A673 (cell line): ENCODE measurements at regions of chr7 and their contacts with region 1.

Region 1: DNA sequence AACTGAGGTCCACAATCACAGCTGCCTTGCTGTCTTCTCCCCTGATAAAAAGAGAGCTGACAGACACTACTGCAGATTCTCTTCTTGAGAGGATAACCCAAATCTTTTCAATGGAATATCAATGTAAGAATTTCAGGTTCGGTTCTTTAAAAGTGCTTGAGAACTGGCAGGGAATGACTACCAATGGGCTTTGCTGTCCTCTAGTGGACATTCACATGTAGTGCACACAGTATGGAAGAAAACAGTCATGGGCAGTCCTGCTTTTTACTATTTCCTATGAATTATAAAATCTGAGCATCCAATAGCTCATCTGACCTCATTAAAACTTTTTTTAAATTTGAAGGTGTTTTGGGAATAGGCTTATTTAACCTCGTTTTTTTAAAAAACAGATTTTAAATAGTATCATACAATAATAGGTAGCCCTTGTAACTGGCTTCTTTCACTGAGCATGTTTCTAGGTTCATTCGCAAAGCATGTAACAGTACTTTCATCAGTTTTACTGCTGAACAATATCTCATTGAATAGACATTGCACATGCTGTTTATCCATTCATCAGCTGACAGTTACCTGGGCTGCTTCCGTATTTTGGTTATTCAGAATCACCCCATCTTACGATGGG is 18.3 kb downstream of the FZD9 start:
- DNase-seq: peak; percentile 68
- H3K4me3 ChIP-seq: no peak overlapping the region
- H3K27ac ChIP-seq: no peak overlapping the region
- H3K4me1 ChIP-seq: no peaks in the 10 kb centered on the region
- H3K27me3 ChIP-seq: no peaks in the 10 kb centered on the region
- CTCF ChIP-seq: peak; percentile 95

Region 2: GRCh38 chr7:73316521-73316920 is 135.4 kb before region 1 on chr7:
- CTCF ChIA-PET with region 1: no interaction called
- POLR2A ChIA-PET with region 1: no interaction called
- intact Hi-C with region 1: loop called (anchors 5 kb)
- DNase-seq: no peak
- H3K4me3 ChIP-seq: no peak overlapping the region
- H3K27ac ChIP-seq: no peak overlapping the region
- H3K4me1 ChIP-seq: no peaks in the 10 kb centered on the region
- H3K27me3 ChIP-seq: no peaks in the 10 kb centered on the region
- CTCF ChIP-seq: no peak

Region 3: DNA sequence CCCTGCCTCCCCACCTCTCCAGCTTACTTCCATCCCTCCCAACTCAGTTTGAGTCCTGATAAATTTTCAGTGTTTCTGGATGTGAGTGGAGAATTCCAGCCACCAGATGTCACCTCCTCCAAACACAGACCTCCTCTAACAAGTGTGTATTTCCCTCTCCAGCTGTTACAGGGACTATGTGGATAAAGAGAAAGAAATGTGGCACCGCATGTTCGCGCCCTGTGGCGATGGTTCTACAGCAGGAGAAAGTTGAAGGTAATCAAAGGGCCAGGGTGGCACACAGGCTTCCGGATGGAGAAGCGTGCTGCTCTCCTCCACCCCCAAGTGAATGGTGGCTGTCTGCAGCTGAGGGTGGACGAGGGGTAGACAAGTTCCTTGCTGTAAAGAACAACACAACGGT is 109.2 kb before region 1 on chr7:
- CTCF ChIA-PET with region 1: no interaction called
- POLR2A ChIA-PET with region 1: no interaction called
- intact Hi-C with region 1: loop called (anchors 5 kb)
- DNase-seq: peak; percentile 66
- H3K4me3 ChIP-seq: no peak overlapping the region
- H3K27ac ChIP-seq: no peak overlapping the region
- H3K4me1 ChIP-seq: no peaks in the 10 kb centered on the region
- H3K27me3 ChIP-seq: no peaks in the 10 kb centered on the region
- CTCF ChIP-seq: peak; percentile 62

Region 4: GRCh38 chr7:73522105-73522872 is 70.4 kb after region 1 on chr7 and contains the start of gene BAZ1B:
- CTCF ChIA-PET with region 1: no interaction called
- POLR2A ChIA-PET with region 1: no interaction called
- intact Hi-C with region 1: loop called (anchors 10 kb)
- DNase-seq: peak; percentile 99
- H3K4me3 ChIP-seq: peak within 1 kb of the TSS; percentile 92
- H3K27ac ChIP-seq: peak within 1 kb of the TSS; percentile 96
- H3K4me1 ChIP-seq: peaks cover 22% of the 10 kb centered on the region
- H3K27me3 ChIP-seq: no peaks in the 10 kb centered on the region
- CTCF ChIP-seq: 0 out of 2 replicates have a peak, but pooled peaks have one; percentile 22
- total RNA-seq, gene BAZ1B: 122 and 127 TPM in 2 replicates

Region 5: DNA sequence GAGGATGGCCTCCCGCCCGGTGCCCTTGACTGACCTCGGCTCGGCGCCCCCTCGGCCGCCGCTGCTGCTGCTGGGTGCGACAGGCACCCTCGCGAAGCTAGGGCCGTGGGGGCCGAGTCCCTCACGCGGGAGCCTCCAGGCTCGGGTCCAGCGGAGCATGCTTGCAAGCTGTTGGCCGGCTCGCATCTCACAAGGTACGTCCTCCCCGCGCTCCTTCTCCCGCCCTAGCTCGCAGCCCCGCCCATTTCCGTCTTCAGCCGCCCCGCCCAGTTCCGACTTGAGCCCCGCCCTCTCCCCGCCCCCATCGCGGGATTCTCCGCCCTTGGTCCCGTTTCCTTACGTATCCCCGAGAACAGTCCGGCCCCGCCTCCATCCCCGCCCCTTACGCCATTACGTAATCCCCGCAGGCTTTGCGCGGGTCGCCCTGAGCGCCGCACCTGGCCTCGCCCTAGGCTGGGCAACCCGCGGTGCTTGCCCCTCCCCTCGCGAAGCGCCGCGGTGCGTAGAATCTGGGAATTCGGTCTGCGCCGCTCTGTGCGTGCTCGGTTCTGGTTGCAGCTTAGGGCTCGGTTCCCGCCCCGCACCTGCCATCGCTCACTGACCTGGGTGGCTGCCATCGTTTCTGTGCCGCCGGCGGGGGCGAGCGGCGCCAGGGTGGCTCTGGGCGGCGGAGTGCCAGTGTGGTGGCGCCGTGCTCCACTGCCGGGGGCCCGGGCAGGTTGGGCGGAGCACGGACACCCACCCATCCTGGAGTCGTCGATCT is 286.9 kb after region 1 on chr7 and contains the start of gene ABHD11:
- CTCF ChIA-PET with region 1: interaction called, 4 read pairs
- POLR2A ChIA-PET with region 1: no interaction called
- intact Hi-C with region 1: loop called (anchors 10 kb)
- DNase-seq: peak; percentile 94
- H3K4me3 ChIP-seq: peak within 1 kb of the TSS; percentile 72
- H3K27ac ChIP-seq: peak within 1 kb of the TSS; percentile 84
- H3K4me1 ChIP-seq: peaks cover 7% of the 10 kb centered on the region
- H3K27me3 ChIP-seq: no peaks in the 10 kb centered on the region
- CTCF ChIP-seq: no peak
- total RNA-seq, gene ABHD11: 20.7 and 22.9 TPM in 2 replicates

Region 6: DNA sequence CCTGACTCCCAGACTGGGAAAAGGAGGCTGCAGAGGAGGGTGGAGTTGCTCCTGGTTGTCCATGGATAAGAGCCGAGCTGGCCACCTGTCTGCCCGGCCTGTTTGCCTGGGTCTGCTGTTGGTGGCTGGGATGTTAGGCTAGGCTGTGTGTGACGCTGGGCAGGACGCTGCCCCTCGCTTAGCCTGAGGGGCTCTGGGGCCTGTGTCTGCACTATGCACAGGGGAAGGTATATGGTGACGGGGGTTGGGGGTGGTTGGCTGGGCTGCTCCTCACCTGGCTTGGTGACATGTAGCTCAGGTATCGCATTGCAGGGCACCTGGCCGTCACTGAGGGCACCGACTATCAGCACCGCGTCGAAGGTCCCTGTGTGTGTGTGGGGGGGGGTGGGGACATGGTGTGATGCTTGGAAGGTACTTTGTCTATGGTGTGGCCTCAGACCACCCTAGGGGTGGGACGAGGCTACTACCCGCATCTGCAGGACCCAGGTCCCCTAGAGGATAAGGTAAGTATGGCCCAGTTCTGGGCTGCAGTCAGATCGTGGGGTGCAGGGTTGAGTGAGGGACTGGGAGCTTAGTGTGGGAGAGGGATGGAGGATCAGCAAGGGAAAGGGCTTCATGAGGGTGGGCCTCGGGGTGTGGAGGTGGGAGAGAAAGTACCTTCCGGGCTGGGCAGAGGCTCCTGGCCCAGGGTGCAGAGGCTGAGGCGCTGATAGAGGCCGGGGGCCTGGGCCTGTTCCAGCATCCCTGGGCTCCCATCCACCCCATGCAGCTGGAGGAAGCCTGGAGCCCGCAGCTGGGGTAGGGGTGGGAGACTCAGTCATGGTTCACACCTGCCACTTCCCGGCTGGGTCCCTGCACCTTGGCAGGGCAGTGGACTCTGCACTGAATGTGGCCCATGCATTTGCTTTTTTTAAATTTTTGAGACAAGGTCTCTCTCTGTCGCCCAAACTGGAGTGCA is 388.1 kb after region 1 on chr7:
- CTCF ChIA-PET with region 1: interaction called, 11 read pairs
- POLR2A ChIA-PET with region 1: no interaction called
- intact Hi-C with region 1: no loop called
- DNase-seq: no peak
- H3K4me3 ChIP-seq: no peak overlapping the region
- H3K27ac ChIP-seq: no peak overlapping the region
- H3K4me1 ChIP-seq: peaks cover 10% of the 10 kb centered on the region
- H3K27me3 ChIP-seq: no peaks in the 10 kb centered on the region
- CTCF ChIP-seq: no peak